Esophagus squamous epithelium (tissue), 5 donors: ENCODE measurements at regions of chr22 and their contacts with region 1.

Region 1: DNA sequence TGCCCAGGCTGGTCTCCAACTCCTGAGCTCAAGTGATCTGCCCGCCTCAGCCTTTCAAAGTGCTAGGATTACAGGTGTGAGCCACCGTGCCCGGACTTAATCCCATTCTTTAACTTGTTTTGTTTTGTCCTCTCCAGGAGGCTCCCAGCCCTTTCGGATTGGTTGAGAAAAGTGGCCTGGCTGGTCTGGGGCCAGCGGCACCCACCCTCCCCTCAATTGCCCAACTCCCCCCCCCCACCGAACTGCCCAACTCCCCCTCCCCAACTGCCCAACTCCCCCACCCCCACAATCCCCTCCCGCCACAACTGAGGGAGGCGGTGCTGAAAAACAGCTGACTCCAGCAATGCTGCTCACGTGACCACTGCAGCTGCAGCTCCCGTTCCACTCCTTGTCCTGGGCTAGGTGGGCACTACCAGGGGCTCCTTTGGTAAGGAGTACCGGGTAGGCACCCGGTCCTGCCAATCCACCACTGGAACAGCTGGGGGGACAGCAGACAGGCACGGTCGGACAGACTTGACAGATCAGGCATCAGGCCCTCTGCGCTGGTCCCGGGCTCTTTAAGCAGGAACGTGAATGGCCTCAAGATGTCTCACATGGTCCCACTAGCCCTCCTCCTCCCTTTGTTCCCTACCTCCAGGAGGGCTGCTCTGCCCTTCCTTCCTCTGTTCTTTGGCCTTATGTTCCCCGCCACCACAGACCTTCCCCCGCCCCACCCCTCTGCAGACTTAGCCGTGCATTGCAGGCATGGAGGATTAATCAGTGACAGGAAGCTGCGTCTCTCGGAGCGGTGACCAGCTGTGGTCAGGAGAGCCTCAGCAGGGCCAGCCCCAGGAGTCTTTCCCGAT is at the start of gene TCN2:
- DNase-seq: peak; percentile 16
- H3K4me3 ChIP-seq: peak within 1 kb of the TSS; percentile 37 to 76 (median 52)
- H3K27ac ChIP-seq: peak within 1 kb of the TSS; percentile 55 to 87 (median 76)
- H3K4me1 ChIP-seq: peaks cover 27 to 50% (median 32%) of the 10 kb centered on the region in 3 donors
- H3K27me3 ChIP-seq: no peaks in the 10 kb centered on the region
- CTCF ChIP-seq: peak in 1 of 6 experiments; percentile 5
- POLR2A ChIP-seq: peak in 2 of 4 donors; percentile 42
- total RNA-seq, gene TCN2: 1.9 to 20.4 (median 10.4) TPM

Region 2: GRCh38 chr22:30150212-30150611 is 456.5 kb before region 1 on chr22:
- intact Hi-C with region 1: no loop called
- DNase-seq: no peak
- H3K4me3 ChIP-seq: no peak overlapping the region
- H3K27ac ChIP-seq: no peak overlapping the region
- H3K4me1 ChIP-seq: no peaks in the 10 kb centered on the region
- H3K27me3 ChIP-seq: peaks cover 0 to 9% (median 0%) of the 10 kb centered on the region in 4 donors
- CTCF ChIP-seq: no peak
- POLR2A ChIP-seq: no peak

Region 3: DNA sequence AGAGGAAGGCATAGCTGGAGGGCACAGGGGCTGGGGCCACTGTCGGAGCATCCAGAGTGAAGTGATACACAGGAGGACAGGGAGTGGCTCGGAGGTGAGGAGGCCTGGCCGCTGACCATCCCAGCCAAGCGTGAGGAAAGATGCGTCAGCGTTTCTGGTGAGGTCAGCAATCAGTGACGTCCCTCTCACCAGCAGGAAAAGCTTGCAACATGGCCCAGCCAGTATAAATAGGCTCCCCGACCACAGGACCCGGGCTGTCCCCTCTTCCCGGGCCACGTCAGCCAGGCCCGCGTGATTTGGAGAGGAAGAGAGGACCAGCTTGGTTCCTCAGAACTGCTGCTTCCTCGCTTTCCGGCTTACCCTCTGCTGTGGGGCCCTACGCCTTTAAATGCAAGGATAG is 335.8 kb before region 1 on chr22:
- intact Hi-C with region 1: loop called (anchors 5 kb)
- DNase-seq: peak; percentile 44
- H3K4me3 ChIP-seq: no peak overlapping the region
- H3K27ac ChIP-seq: peak overlapping the region in 3 of 4 donors; percentile 30 to 52 (median 44)
- H3K4me1 ChIP-seq: peaks cover 1 to 36% (median 7%) of the 10 kb centered on the region in 3 donors
- H3K27me3 ChIP-seq: no peaks in the 10 kb centered on the region
- CTCF ChIP-seq: no peak
- POLR2A ChIP-seq: peak in 1 of 4 donors; percentile 23

Region 4: GRCh38 chr22:30547188-30547587 is 59.5 kb before region 1 on chr22:
- intact Hi-C with region 1: no loop called
- DNase-seq: no peak
- H3K4me3 ChIP-seq: no peak overlapping the region
- H3K27ac ChIP-seq: no peak overlapping the region
- H3K4me1 ChIP-seq: peaks cover 0 to 7% (median 3%) of the 10 kb centered on the region in 3 donors
- H3K27me3 ChIP-seq: peaks cover 0 to 54% (median 0%) of the 10 kb centered on the region in 4 donors
- CTCF ChIP-seq: no peak
- POLR2A ChIP-seq: no peak